CD4-positive, alpha-beta memory T cell (primary cell): ENCODE measurements at regions of chr12 and their contacts with region 1.

Region 1: DNA sequence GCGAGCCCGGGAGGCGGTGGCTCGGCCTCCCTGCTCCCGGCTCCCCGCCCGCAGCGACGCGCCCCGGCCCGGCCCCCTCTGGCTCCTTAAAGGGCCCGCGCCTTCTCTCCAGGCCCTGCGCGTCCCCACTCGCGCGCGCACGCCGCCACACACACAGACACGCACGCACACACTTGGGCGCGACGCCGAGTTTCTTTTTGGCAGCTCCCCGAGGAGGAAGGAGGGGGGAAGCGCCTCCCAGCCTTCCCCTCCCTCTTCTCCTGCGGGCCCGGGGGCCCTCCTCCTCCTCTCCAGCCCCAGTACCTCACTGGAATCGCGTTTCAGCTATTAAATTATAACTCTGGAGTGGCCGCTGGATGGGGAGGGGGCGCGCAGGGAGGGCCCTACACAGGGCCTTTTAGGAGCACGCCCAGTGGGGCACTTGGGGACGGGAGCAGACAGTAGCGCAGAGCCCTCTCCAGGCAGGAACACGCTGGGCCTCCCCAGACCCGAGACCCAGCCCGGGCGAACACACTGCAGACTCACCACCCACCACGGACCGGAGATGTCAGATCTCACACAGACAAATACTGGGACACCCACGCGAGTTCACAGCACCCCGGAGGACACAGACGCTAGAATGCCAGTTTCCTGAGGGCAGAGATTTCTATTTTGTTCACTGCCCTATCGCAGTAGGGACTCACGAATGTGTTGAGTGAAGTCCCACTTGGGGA is 405 bp upstream of the NCOR2 start:
- DNase-seq: peak; percentile 83 to 86 (median 84)
- H3K4me3 ChIP-seq: peak overlapping the region in 1 of 2 donors; percentile 59
- H3K4me3 Mint-ChIP-seq: peak overlapping the region; percentile 82 to 90 (median 88)
- H3K27ac ChIP-seq: no peak overlapping the region
- H3K27ac Mint-ChIP-seq: peak overlapping the region; percentile 72 to 92 (median 85)
- H3K4me1 ChIP-seq: peaks cover 36% of the 10 kb centered on the region
- H3K4me1 Mint-ChIP-seq: peaks cover 12 to 44% (median 21%) of the 10 kb centered on the region in 4 donors
- H3K27me3 ChIP-seq: no peaks in the 10 kb centered on the region
- H3K27me3 Mint-ChIP-seq: no peaks in the 10 kb centered on the region

Region 2: DNA sequence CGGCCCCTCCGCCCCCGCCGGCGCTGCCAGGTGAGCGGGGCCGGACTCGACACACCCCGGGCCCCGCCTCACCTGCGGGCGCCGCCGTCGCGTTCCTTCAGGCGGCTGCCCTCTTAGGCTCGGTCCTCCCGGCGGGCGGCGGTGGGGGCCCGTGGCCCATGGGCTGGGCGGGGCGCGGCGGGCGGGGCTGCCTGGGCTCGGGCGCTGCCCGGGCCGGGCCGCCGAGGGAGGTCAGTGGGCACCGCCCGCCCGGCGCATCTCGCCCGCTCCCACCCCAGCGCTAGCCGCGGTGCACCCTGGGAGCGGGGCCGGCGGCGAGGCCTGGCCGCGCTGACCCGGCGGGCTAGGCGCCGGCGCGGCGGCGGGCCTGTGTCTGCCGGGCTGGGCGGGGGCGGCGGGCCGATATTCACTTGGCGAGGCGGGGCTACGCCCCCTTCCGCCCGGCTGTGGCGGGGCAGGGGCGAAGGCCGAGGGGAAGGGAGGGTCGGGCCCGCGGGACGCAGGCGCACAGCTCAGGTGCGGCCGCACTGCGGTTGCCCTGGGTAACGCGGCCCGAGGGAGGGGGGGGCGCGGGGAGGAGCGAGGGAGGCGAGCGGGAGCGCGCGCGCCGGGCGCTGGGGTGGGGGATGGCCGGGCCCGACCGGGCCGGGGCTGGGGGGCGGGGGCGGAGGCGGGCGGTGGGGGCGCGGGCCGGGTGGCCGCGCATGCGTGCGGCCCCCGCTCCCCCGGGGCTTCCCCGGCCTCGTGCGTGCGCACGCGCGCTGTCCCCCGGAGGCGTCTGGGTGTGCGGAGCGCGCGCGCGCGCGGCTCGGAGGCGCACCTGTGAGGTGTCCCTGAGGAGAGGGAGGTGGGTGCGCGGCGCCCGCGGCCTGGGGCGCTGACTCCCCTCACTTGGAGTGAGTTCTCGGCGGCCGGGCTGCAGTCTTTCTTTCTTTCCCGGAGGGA is 595.1 kb before region 1 on chr12 and contains the starts of genes CCDC92 and ZNF664:
- CTCF ChIA-PET with region 1: no interaction called
- POLR2A ChIA-PET with region 1: interaction called, 4 read pairs
- intact Hi-C with region 1: loop called (anchors 5 kb)
- DNase-seq: peak; percentile 91 to 96 (median 94)
- H3K4me3 ChIP-seq: peak within 1 kb of the TSS; percentile 2 to 54
- H3K4me3 Mint-ChIP-seq: peak within 1 kb of the TSS; percentile 91 to 98 (median 94)
- H3K27ac ChIP-seq: peak within 1 kb of the TSS; percentile 44
- H3K27ac Mint-ChIP-seq: peak within 1 kb of the TSS; percentile 91 to 99 (median 95)
- H3K4me1 ChIP-seq: peaks cover 21% of the 10 kb centered on the region
- H3K4me1 Mint-ChIP-seq: peaks cover 26 to 48% (median 31%) of the 10 kb centered on the region in 4 donors
- H3K27me3 ChIP-seq: no peaks in the 10 kb centered on the region
- H3K27me3 Mint-ChIP-seq: no peaks in the 10 kb centered on the region
- total RNA-seq, gene CCDC92: 32.1 to 35.6 TPM
- total RNA-seq, gene ZNF664: 54.0 to 57.9 TPM

Region 3: DNA sequence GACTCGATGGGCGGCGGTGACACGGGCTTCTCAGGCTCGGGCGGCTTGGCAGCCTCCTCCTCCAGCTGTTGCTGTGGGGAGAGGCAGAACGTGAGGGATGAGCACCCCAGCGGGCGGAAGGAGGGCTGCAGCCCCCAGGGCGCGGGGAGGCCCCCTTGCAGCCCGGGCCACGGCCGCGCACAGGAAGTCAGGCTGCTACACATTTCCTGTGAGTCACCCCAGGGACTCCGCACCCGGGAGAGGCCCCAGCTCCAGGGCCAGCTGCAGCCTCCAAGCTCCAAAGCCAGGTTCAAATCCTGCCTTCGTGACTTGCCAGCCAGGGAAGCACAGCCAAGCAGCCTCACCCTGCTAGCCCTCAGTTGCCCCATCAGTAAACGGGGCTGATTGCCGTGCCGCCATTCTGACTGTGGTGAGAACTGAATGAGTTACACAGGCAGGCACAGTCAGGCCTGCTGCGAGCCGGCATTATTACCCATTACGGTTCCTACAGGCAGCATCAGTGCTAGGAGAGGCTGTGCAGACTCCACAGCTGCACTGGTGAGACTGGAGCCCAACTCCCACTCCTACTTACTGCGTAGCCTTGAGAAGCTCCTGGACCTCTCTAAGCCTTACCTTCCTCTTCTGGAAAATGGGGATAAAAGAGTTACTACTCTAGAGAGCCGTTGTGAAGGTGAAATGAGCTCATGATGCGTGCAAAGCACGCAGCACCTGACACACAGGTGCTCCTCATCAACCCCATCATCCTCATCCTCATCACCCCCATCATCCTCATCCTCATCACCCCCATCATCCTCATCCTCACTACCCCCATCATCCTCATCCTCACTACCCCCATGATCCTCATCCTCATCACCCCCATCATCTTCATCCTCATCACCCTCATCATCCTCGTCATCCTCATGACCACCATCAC is 101.3 kb before region 1 on chr12:
- CTCF ChIA-PET with region 1: no interaction called
- POLR2A ChIA-PET with region 1: interaction called, 6 read pairs
- intact Hi-C with region 1: loop called (anchors 5 kb)
- DNase-seq: peak; percentile 87 to 97 (median 89)
- H3K4me3 ChIP-seq: peak overlapping the region; percentile 20 to 27
- H3K4me3 Mint-ChIP-seq: peak overlapping the region; percentile 73 to 85 (median 76)
- H3K27ac ChIP-seq: peak overlapping the region; percentile 82
- H3K27ac Mint-ChIP-seq: peak overlapping the region; percentile 93 to 97 (median 94)
- H3K4me1 ChIP-seq: peaks cover 52% of the 10 kb centered on the region
- H3K4me1 Mint-ChIP-seq: peaks cover 39 to 71% (median 55%) of the 10 kb centered on the region in 4 donors
- H3K27me3 ChIP-seq: no peaks in the 10 kb centered on the region
- H3K27me3 Mint-ChIP-seq: no peaks in the 10 kb centered on the region

Region 4: DNA sequence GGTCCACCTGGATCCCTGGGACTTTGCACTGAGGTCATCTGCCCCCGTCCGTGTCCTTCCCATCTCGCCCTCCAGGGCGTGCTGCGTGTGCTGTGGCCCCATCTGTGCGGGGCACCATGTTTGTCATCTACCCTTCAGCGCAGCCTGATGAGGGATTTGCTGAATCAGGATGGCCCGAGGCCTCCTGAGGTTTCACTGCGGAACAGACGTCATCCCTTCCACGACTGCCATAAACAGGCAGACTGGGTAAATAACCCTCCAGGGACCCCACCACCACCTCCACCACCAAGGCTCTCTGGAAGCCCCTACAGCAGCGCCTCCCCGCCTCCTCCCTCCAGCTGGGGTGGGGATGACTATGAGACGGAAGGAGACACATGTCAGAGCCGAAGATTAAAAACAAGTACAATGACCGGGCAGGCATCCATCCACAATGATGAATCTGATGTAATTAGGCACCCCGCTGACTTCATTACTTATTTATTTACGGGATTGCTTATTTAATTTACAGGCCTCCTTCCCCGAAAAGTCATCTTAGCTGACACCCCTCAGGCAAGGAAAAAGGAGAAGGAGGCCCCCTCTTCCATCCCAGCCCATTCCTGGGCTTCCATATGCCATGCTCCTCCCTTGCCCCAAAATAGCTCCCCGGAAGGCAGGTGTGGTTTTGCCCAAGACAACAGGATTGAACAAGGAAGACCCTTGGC is 39.8 kb before region 1 on chr12:
- CTCF ChIA-PET with region 1: no interaction called
- POLR2A ChIA-PET with region 1: no interaction called
- intact Hi-C with region 1: no loop called
- DNase-seq: peak in 1 of 5 donors; percentile 12
- H3K4me3 ChIP-seq: no peak overlapping the region
- H3K4me3 Mint-ChIP-seq: no peak overlapping the region
- H3K27ac ChIP-seq: no peak overlapping the region
- H3K27ac Mint-ChIP-seq: peak overlapping the region in 1 of 7 donors; percentile 5
- H3K4me1 ChIP-seq: no peaks in the 10 kb centered on the region
- H3K4me1 Mint-ChIP-seq: peaks cover 5 to 34% (median 18%) of the 10 kb centered on the region in 4 donors
- H3K27me3 ChIP-seq: no peaks in the 10 kb centered on the region
- H3K27me3 Mint-ChIP-seq: no peaks in the 10 kb centered on the region

Region 5: DNA sequence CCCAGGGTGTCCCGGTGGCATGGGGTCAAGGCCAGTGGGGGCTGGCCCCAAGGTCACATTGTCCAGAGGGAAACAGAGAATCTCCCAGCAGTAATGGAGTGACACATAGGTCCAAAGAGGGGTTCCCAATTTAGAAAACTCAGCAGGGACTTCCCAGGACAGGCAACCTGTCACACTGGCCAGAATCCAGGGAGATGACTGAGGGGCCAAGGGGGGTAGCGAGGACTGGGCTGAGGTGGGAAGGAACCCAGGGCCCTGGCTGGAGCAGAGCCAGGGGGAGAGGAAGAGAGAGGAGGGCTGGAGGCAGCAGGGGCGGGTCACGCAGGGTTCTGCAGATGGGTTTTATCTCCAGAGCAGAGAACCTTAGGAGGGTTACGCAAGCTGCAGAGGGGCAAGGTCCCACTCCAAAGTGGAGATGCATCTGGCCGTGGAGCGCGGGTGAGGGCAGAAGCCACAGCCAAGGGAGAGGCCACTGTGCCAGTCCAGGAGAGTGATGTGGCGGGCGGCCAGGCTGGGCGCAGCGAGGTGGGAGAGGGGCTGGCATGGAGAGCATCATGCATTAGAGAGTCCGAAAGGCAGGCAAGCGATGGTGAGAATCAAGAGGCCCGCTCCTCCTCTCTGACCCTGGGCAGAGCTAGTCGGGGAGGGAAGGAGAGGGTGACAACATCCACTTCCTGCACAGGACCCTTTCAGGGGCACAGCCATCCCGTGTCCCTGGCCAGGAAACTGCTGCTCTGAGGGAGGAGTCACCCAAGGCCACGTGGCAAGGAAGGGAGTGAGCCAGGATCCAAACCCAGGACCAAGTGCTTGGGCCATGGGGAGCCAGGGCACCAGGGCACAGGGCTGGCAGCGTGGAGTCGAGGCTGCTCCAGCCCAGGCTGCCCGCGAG is 29.4 kb before region 1 on chr12:
- CTCF ChIA-PET with region 1: no interaction called
- POLR2A ChIA-PET with region 1: no interaction called
- intact Hi-C with region 1: no loop called
- DNase-seq: peak in 1 of 5 donors; percentile 5
- H3K4me3 ChIP-seq: no peak overlapping the region
- H3K4me3 Mint-ChIP-seq: peak overlapping the region in 1 of 8 donors; percentile 43
- H3K27ac ChIP-seq: no peak overlapping the region
- H3K27ac Mint-ChIP-seq: peak overlapping the region in 5 of 7 donors; percentile 11 to 59 (median 47)
- H3K4me1 ChIP-seq: peaks cover 29% of the 10 kb centered on the region
- H3K4me1 Mint-ChIP-seq: peaks cover 20 to 54% (median 32%) of the 10 kb centered on the region in 4 donors
- H3K27me3 ChIP-seq: no peaks in the 10 kb centered on the region
- H3K27me3 Mint-ChIP-seq: no peaks in the 10 kb centered on the region

Region 6: GRCh38 chr12:124609041-124609995 is 41.5 kb after region 1 on chr12:
- CTCF ChIA-PET with region 1: no interaction called
- POLR2A ChIA-PET with region 1: interaction called, 18 read pairs
- intact Hi-C with region 1: loop called (anchors 1 kb)
- DNase-seq: peak; percentile 92 to 94 (median 93)
- H3K4me3 ChIP-seq: peak overlapping the region; percentile 4 to 32
- H3K4me3 Mint-ChIP-seq: peak overlapping the region; percentile 79 to 88 (median 84)
- H3K27ac ChIP-seq: no peak overlapping the region
- H3K27ac Mint-ChIP-seq: peak overlapping the region; percentile 9 to 93 (median 80)
- H3K4me1 ChIP-seq: peaks cover 32% of the 10 kb centered on the region
- H3K4me1 Mint-ChIP-seq: peaks cover 22 to 43% (median 32%) of the 10 kb centered on the region in 4 donors
- H3K27me3 ChIP-seq: no peaks in the 10 kb centered on the region
- H3K27me3 Mint-ChIP-seq: no peaks in the 10 kb centered on the region

Region 7: DNA sequence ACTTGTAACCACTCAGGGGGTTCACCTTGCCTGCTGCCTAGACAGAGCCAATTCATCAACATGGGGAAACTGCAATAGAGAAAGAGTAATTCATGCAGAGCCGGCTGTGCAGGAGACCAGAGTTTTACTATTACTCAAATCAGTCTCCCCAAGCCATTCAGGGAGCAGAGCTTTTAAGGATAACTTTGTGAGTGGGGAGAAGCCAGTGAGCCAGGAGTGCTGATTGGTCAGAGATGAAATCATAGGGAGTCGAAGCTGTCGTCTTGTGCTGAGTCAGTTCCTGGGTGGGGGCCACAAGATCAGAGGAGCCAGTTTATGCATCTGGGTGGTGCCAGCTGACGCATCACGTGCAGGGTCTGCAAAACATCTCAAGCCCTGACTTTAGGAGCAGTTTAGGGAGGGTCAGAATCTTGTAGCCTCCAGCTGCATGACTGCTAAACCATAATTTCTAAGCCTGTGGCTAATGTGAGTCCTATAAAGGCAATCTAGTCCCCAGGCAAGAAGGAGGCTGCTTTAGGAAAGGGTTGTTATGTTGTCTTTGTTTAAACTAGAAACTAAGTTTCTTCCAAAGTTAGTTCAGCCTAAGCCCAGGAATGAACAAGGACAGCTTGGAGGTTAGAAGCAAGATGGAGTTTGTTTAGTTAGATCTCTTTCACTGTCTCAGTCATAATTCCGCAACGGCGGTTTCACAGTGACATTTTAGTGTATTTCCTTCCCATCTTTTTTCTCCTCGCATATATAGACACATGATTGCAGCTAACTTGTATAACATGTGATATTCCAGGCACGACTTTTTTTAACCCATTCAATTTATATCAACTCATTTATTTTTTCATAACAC is 68.5 kb after region 1 on chr12:
- CTCF ChIA-PET with region 1: no interaction called
- POLR2A ChIA-PET with region 1: no interaction called
- intact Hi-C with region 1: loop called (anchors 2 kb)
- DNase-seq: peak; percentile 16 to 78 (median 26)
- H3K4me3 ChIP-seq: no peak overlapping the region
- H3K4me3 Mint-ChIP-seq: peak overlapping the region in 7 of 8 donors; percentile 27 to 64 (median 50)
- H3K27ac ChIP-seq: no peak overlapping the region
- H3K27ac Mint-ChIP-seq: peak overlapping the region in 2 of 7 donors; percentile 5 to 29
- H3K4me1 ChIP-seq: peaks cover 17% of the 10 kb centered on the region
- H3K4me1 Mint-ChIP-seq: peaks cover 9 to 16% (median 12%) of the 10 kb centered on the region in 4 donors
- H3K27me3 ChIP-seq: no peaks in the 10 kb centered on the region
- H3K27me3 Mint-ChIP-seq: peaks cover 0 to 1% of the 10 kb centered on the region in 2 donors

Region 8: GRCh38 chr12:124713436-124714082 is 145.7 kb after region 1 on chr12:
- CTCF ChIA-PET with region 1: no interaction called
- POLR2A ChIA-PET with region 1: no interaction called
- intact Hi-C with region 1: loop called (anchors 10 kb)
- DNase-seq: peak; percentile 52 to 76 (median 64)
- H3K4me3 ChIP-seq: peak overlapping the region; percentile 20 to 54
- H3K4me3 Mint-ChIP-seq: peak overlapping the region; percentile 75 to 95 (median 83)
- H3K27ac ChIP-seq: peak overlapping the region; percentile 25
- H3K27ac Mint-ChIP-seq: peak overlapping the region; percentile 77 to 93 (median 86)
- H3K4me1 ChIP-seq: peaks cover 17% of the 10 kb centered on the region
- H3K4me1 Mint-ChIP-seq: peaks cover 10 to 20% (median 13%) of the 10 kb centered on the region in 4 donors
- H3K27me3 ChIP-seq: no peaks in the 10 kb centered on the region
- H3K27me3 Mint-ChIP-seq: no peaks in the 10 kb centered on the region

Region 9: DNA sequence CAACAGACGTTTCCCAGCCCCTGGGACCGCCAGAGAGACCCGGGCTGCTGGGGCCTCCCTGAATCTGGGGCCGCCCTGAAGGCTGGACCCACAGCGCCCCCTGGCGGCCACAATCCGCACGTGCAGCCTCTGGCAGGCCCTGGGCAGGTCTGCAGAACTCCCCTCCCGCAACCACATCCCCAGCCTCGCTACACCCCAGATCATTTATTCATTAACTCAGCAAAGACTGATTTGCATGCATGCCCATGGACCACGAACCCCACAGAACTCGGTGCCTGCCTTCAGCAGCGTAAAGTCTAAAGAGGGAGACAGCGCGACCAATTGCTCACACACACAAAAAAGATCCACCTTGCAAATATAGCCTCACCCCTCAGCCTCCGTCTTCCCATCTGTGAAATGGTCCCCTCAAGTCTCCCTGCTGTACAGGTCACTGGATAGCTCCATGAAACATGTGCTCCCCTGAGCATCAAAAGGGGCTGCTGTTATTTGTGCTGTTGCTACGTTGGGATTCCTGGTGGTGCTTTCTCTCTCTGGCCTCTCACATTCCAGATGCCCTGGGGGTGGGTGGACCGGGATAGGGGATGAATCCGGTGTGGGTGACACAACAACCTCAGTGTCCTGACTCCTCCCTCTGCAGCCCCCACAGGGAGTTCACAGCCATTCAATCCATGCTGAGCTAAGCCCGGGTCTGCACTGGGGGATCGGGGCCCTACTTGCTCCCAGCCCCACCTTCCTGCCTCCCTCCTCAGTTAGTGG is 199.4 kb after region 1 on chr12:
- CTCF ChIA-PET with region 1: interaction called, 4 read pairs
- POLR2A ChIA-PET with region 1: no interaction called
- intact Hi-C with region 1: loop called (anchors 5 kb)
- DNase-seq: peak; percentile 75 to 81 (median 76)
- H3K4me3 ChIP-seq: no peak overlapping the region
- H3K4me3 Mint-ChIP-seq: peak overlapping the region in 2 of 8 donors; percentile 40 to 48
- H3K27ac ChIP-seq: no peak overlapping the region
- H3K27ac Mint-ChIP-seq: peak overlapping the region in 2 of 7 donors; percentile 10 to 74
- H3K4me1 ChIP-seq: peaks cover 9% of the 10 kb centered on the region
- H3K4me1 Mint-ChIP-seq: peaks cover 9 to 16% (median 12%) of the 10 kb centered on the region in 4 donors
- H3K27me3 ChIP-seq: no peaks in the 10 kb centered on the region
- H3K27me3 Mint-ChIP-seq: peaks cover 6 to 10% of the 10 kb centered on the region in 2 donors

Region 10: DNA sequence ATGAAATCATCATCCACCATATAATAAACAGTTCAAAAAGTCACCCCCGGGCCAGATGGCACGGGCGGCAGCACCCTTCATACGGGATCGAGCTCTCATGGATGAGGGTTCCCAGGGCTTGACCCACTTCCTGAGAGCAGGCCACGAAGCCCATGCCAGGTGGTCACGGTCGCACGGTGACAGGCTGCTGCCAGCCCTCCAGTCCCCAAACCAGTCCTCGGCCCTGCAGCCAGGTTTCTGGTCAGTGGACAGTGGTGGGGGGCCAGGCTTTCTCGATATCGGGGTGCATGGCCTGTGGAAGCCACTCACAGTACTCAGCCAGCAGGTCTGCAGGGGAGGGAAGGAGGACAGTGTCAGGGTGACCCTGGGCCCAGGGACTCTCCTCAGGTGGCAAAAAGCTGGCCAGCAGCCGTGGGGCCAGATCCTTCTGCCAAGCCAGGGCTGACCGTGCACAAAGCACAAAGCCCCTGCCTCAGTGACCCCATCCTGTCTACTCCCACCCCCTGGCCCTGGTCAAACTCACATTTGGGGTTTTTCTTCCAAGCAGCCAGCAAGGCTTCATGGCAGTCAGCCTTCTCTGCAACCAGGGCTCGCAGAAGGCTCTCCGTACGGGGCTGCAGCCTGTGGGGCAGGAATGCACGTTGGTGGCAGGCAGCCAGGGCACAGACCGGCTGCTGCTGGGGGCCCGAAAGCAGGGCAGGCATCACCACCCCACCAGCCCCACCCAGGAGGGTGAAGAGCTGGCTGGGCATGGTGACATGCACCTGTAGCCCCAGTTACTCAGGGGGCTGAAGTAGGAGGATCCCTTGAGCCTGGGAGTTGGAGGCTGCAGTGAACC is 380.0 kb after region 1 on chr12:
- CTCF ChIA-PET with region 1: no interaction called
- POLR2A ChIA-PET with region 1: no interaction called
- intact Hi-C with region 1: no loop called
- DNase-seq: no peak
- H3K4me3 ChIP-seq: no peak overlapping the region
- H3K4me3 Mint-ChIP-seq: no peak overlapping the region
- H3K27ac ChIP-seq: no peak overlapping the region
- H3K27ac Mint-ChIP-seq: no peak overlapping the region
- H3K4me1 ChIP-seq: no peaks in the 10 kb centered on the region
- H3K4me1 Mint-ChIP-seq: no peaks in the 10 kb centered on the region
- H3K27me3 ChIP-seq: no peaks in the 10 kb centered on the region
- H3K27me3 Mint-ChIP-seq: no peaks in the 10 kb centered on the region